ENCODE measurements at regions of chr1 and their contacts with region 1.

Region 1: GRCh38 chr1:230310381-230311163 is 115.6 kb downstream of the PGBD5 start:
- DNase-seq: peak; percentile 22 to 83 (median 63)
- ATAC-seq: no peak
- H3K4me3 ChIP-seq: no peak overlapping the region
- H3K4me3 Mint-ChIP-seq: no peak overlapping the region
- H3K27ac ChIP-seq: no peak overlapping the region
- H3K27ac Mint-ChIP-seq: no peak overlapping the region
- H3K4me1 ChIP-seq: no peaks in the 10 kb centered on the region
- H3K4me1 Mint-ChIP-seq: peaks cover 5% of the 10 kb centered on the region
- H3K27me3 ChIP-seq: no peaks in the 10 kb centered on the region
- H3K27me3 Mint-ChIP-seq: peaks cover 2% of the 10 kb centered on the region
- CTCF ChIP-seq: peak; percentile 98

Region 2: GRCh38 chr1:229714964-229715603 is 595.5 kb before region 1 on chr1:
- CTCF ChIA-PET with region 1: interaction called, 4 read pairs
- POLR2A ChIA-PET with region 1: no interaction called
- intact Hi-C with region 1: loop called in 1 of 2 experiments (anchors 1 kb)
- DNase-seq: peak in 5 of 9 experiments; percentile 21 to 55 (median 47)
- ATAC-seq: no peak
- H3K4me3 ChIP-seq: no peak overlapping the region
- H3K4me3 Mint-ChIP-seq: no peak overlapping the region
- H3K27ac ChIP-seq: no peak overlapping the region
- H3K27ac Mint-ChIP-seq: no peak overlapping the region
- H3K4me1 ChIP-seq: no peaks in the 10 kb centered on the region
- H3K4me1 Mint-ChIP-seq: no peaks in the 10 kb centered on the region
- H3K27me3 ChIP-seq: no peaks in the 10 kb centered on the region
- H3K27me3 Mint-ChIP-seq: no peaks in the 10 kb centered on the region
- CTCF ChIP-seq: peak; percentile 25